Activated T-helper 2 cell treated with anti-CD3 and anti-CD28 coated beads, Interferon-gamma antibody, Interleukin-2, Interleukin-4, amounts not matched to agents 10 μg/mL and 5 μg/mL and 100 μg/mL, durations not matched to agents 14 hours and 24 hours and 36 hours (primary cell): ENCODE measurements at regions of chrX and their contacts with region 1.

Region 1: GRCh38 chrX:81174286-81174685 is 27.4 kb downstream of the HMGN5 start:
- DNase-seq: no peak
- H3K4me3 Mint-ChIP-seq: no peak overlapping the region
- H3K27ac Mint-ChIP-seq: no peak overlapping the region
- H3K4me1 Mint-ChIP-seq: no peaks in the 10 kb centered on the region
- H3K27me3 Mint-ChIP-seq: no peaks in the 10 kb centered on the region

Region 2: DNA sequence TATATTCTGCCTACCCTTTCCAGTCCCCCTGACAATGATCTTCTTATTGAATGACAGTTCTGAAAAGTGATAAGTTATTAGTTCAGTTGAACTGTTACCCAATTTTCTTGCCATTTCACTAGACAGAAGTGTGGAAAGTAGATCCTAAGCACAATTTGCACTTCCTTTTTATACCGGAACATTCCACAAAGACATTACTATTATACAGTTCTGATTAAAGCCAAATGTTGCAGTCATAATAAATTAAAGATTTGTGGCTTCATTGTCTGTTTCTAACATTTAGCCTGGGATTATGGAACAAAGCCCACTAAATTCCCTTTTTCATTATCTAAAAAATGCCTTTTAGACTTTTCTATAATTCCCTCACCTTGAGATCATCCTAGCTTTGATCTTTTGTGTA is 41.4 kb after region 1 on chrX:
- intact Hi-C with region 1: no loop called
- DNase-seq: no peak
- H3K4me3 Mint-ChIP-seq: no peak overlapping the region
- H3K27ac Mint-ChIP-seq: no peak overlapping the region
- H3K4me1 Mint-ChIP-seq: peaks cover 8% of the 10 kb centered on the region
- H3K27me3 Mint-ChIP-seq: no peaks in the 10 kb centered on the region

Region 3: DNA sequence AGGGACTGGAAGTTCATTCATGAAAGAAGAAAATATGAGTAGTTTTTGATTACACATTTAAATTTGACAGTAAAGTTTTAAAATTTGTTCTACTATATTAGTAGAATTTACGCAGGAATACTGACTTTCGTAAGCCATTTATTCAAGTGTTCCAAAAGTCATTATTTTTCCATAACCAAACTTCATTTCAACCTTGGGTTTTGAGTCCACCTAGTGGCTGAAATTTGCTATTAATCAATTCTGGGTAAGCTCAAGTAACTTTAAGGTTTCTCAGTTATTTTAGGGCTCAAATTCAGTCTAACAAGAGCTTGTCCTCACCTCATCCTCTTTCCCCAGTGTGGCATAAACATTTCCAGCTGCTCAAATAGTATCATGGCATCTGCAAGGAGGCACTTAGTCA is 203.0 kb after region 1 on chrX:
- intact Hi-C with region 1: loop called (anchors 1 kb)
- DNase-seq: no peak
- H3K4me3 Mint-ChIP-seq: no peak overlapping the region
- H3K27ac Mint-ChIP-seq: no peak overlapping the region
- H3K4me1 Mint-ChIP-seq: no peaks in the 10 kb centered on the region
- H3K27me3 Mint-ChIP-seq: no peaks in the 10 kb centered on the region

Region 4: GRCh38 chrX:81900522-81900921 is 726.2 kb after region 1 on chrX:
- intact Hi-C with region 1: no loop called
- DNase-seq: no peak
- H3K4me3 Mint-ChIP-seq: no peak overlapping the region
- H3K27ac Mint-ChIP-seq: no peak overlapping the region
- H3K4me1 Mint-ChIP-seq: no peaks in the 10 kb centered on the region
- H3K27me3 Mint-ChIP-seq: no peaks in the 10 kb centered on the region